Natural killer cell (primary cell): ENCODE measurements at regions of chr7 and their contacts with region 1.

Region 1: GRCh38 chr7:104983578-104984539 is 30.1 kb upstream of the KMT2E start:
- DNase-seq: peak; percentile 81 to 90
- ATAC-seq: peak; percentile 88 to 97 (median 91)
- H3K4me3 ChIP-seq: peak overlapping the region; percentile 81
- H3K4me3 Mint-ChIP-seq: peak overlapping the region; percentile 98
- H3K27ac ChIP-seq: peak overlapping the region; percentile 98
- H3K27ac Mint-ChIP-seq: peak overlapping the region in 1 of 2 donors; percentile 98
- H3K4me1 ChIP-seq: peaks cover 16% of the 10 kb centered on the region
- H3K4me1 Mint-ChIP-seq: peaks cover 34 to 49% of the 10 kb centered on the region in 2 donors
- H3K27me3 ChIP-seq: no peaks in the 10 kb centered on the region
- H3K27me3 Mint-ChIP-seq: no peaks in the 10 kb centered on the region
- CTCF ChIP-seq: peak; percentile 65

Region 2: DNA sequence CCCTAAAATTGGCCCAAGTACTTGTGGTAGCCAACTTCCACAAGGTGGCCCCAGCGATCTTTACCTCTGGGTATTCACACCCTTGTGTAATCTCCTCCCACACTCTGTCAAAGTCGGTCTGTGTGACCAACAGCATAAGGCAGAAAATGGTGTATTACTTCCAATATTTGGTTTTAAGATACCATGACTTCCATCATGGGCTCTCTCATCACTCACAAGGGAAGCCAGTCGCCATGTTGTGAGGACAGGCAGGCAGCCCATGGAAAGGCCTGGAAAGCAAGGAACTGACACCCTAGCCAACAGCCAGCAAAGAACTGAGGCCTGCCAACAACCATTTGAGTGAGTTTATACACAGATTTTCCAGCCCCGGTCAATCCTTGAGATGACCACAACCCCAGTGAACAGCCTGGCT is 60.8 kb before region 1 on chr7:
- intact Hi-C with region 1: loop called (anchors 1 kb)
- DNase-seq: peak; percentile 53 to 88
- ATAC-seq: peak; percentile 90 to 98 (median 98)
- H3K4me3 ChIP-seq: no peak overlapping the region
- H3K4me3 Mint-ChIP-seq: no peak overlapping the region
- H3K27ac ChIP-seq: no peak overlapping the region
- H3K27ac Mint-ChIP-seq: peak overlapping the region in 1 of 2 donors; percentile 71
- H3K4me1 ChIP-seq: peaks cover 4% of the 10 kb centered on the region
- H3K4me1 Mint-ChIP-seq: no peaks in the 10 kb centered on the region
- H3K27me3 ChIP-seq: no peaks in the 10 kb centered on the region
- H3K27me3 Mint-ChIP-seq: no peaks in the 10 kb centered on the region
- CTCF ChIP-seq: peak; percentile 77

Region 3: DNA sequence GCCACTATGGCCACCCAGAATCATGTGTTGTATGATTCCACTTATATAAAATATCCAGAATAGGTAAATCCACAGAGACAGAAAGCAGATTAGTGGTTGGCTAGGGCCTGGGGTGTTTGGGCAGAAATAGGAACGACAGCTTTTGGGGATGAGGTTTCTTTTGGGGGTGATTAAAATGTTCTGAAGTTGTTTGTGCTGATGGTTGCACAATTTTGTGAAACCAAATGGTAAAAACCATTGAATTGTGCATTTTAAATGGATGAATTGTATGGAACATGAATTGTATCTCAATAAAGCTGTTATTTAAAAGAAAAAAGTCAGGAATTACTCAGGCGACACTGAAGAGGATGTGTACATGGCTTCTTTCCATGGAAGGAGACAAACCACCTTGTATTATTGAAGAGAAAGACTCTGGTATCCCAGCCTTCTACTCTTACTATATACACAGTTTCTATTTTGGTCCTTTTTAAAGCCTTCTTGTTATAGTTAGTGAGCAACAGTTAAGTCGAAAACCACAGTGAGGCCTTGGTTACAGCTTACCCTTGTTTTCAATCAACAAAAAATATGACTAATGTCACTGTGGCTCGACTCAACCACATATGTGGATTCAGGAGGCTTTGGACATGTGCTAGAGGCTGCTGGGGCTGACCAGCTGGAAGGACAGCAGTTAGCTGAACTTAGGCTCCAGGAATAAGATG is 27.0 kb before region 1 on chr7:
- intact Hi-C with region 1: loop called (anchors 1 kb)
- DNase-seq: peak; percentile 54 to 64
- ATAC-seq: peak; percentile 80 to 90 (median 89)
- H3K4me3 ChIP-seq: no peak overlapping the region
- H3K4me3 Mint-ChIP-seq: peak overlapping the region; percentile 41
- H3K27ac ChIP-seq: peak overlapping the region; percentile 85
- H3K27ac Mint-ChIP-seq: peak overlapping the region; percentile 97 to 100
- H3K4me1 ChIP-seq: peaks cover 29% of the 10 kb centered on the region
- H3K4me1 Mint-ChIP-seq: peaks cover 24 to 28% of the 10 kb centered on the region in 2 donors
- H3K27me3 ChIP-seq: no peaks in the 10 kb centered on the region
- H3K27me3 Mint-ChIP-seq: no peaks in the 10 kb centered on the region
- CTCF ChIP-seq: no peak

Region 4: GRCh38 chr7:104971290-104972071 is 12.4 kb before region 1 on chr7:
- intact Hi-C with region 1: no loop called
- DNase-seq: no peak
- ATAC-seq: no peak
- H3K4me3 ChIP-seq: no peak overlapping the region
- H3K4me3 Mint-ChIP-seq: no peak overlapping the region
- H3K27ac ChIP-seq: no peak overlapping the region
- H3K27ac Mint-ChIP-seq: no peak overlapping the region
- H3K4me1 ChIP-seq: no peaks in the 10 kb centered on the region
- H3K4me1 Mint-ChIP-seq: peaks cover 0 to 4% of the 10 kb centered on the region in 2 donors
- H3K27me3 ChIP-seq: no peaks in the 10 kb centered on the region
- H3K27me3 Mint-ChIP-seq: no peaks in the 10 kb centered on the region
- CTCF ChIP-seq: no peak

Region 5: DNA sequence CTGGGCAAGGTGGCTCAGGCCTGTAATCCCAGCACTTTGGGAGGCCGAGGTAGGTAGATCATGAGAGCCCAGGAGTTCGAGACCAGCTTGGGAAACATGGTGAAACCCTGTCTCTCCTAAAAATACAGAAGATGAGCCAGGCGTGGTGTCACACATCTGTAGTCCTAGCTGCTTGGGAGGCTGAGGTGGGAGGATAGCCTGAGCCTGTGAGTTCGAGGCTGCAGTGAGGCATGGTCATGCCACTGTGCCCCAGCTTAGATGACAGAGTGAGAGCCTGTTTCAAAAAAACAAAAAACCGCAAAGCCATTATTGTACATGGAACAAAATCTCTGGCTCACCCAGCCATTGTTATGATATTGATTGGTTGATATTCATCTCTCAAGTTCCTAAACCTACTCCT is 83.8 kb after region 1 on chr7:
- intact Hi-C with region 1: loop called (anchors 5 kb)
- DNase-seq: no peak
- ATAC-seq: peak in 2 of 3 donors; percentile 19 to 22
- H3K4me3 ChIP-seq: no peak overlapping the region
- H3K4me3 Mint-ChIP-seq: no peak overlapping the region
- H3K27ac ChIP-seq: no peak overlapping the region
- H3K27ac Mint-ChIP-seq: peak overlapping the region; percentile 11 to 45
- H3K4me1 ChIP-seq: no peaks in the 10 kb centered on the region
- H3K4me1 Mint-ChIP-seq: peaks cover 29 to 36% of the 10 kb centered on the region in 2 donors
- H3K27me3 ChIP-seq: no peaks in the 10 kb centered on the region
- H3K27me3 Mint-ChIP-seq: no peaks in the 10 kb centered on the region
- CTCF ChIP-seq: no peak

Region 6: GRCh38 chr7:105487579-105488571 is 504.0 kb after region 1 on chr7:
- intact Hi-C with region 1: loop called (anchors 5 kb)
- DNase-seq: peak in 1 of 2 donors; percentile 57
- ATAC-seq: peak in 1 of 3 donors; percentile 36
- H3K4me3 ChIP-seq: no peak overlapping the region
- H3K4me3 Mint-ChIP-seq: no peak overlapping the region
- H3K27ac ChIP-seq: no peak overlapping the region
- H3K27ac Mint-ChIP-seq: no peak overlapping the region
- H3K4me1 ChIP-seq: no peaks in the 10 kb centered on the region
- H3K4me1 Mint-ChIP-seq: no peaks in the 10 kb centered on the region
- H3K27me3 ChIP-seq: no peaks in the 10 kb centered on the region
- H3K27me3 Mint-ChIP-seq: no peaks in the 10 kb centered on the region
- CTCF ChIP-seq: peak; percentile 28

Region 7: DNA sequence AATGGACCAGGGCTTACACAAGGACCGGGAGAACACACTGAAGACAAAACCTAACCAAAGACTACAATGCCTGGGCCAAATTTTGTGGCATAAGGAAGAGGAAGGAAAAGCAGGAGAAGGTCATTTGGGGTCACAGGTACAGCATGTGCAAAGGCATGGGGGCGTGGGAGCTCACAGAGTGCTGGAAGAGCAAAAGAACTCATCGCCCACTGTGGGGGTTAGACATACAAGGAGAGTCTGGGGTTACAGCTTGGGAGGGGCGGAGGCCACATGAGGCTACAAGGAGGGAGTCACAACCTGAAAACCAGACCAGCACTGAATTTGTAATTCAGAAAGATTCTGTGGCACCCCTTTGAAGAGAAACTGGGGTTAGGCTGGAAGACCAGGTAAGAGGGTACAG is 528.6 kb after region 1 on chr7:
- intact Hi-C with region 1: no loop called
- DNase-seq: no peak
- ATAC-seq: no peak
- H3K4me3 ChIP-seq: no peak overlapping the region
- H3K4me3 Mint-ChIP-seq: no peak overlapping the region
- H3K27ac ChIP-seq: no peak overlapping the region
- H3K27ac Mint-ChIP-seq: no peak overlapping the region
- H3K4me1 ChIP-seq: no peaks in the 10 kb centered on the region
- H3K4me1 Mint-ChIP-seq: no peaks in the 10 kb centered on the region
- H3K27me3 ChIP-seq: no peaks in the 10 kb centered on the region
- H3K27me3 Mint-ChIP-seq: no peaks in the 10 kb centered on the region
- CTCF ChIP-seq: no peak